Aorta (tissue), 5 donors: ENCODE measurements at regions of chr4 and their contacts with region 1.

Region 1: GRCh38 chr4:177250056-177250696 is 59.5 kb upstream of the NEIL3 start:
- DNase-seq: peak; percentile 69 to 88
- ATAC-seq: peak; percentile 87
- H3K4me3 ChIP-seq: no peak overlapping the region
- H3K27ac ChIP-seq: no peak overlapping the region
- H3K4me1 ChIP-seq: no peaks in the 10 kb centered on the region
- H3K27me3 ChIP-seq: no peaks in the 10 kb centered on the region

Region 2: GRCh38 chr4:177339477-177340374 is 89.5 kb after region 1 on chr4:
- intact Hi-C with region 1: loop called (anchors 1 to 2 kb)
- DNase-seq: no peak
- ATAC-seq: peak; percentile 79
- H3K4me3 ChIP-seq: no peak overlapping the region
- H3K27ac ChIP-seq: no peak overlapping the region
- H3K4me1 ChIP-seq: no peaks in the 10 kb centered on the region
- H3K27me3 ChIP-seq: no peaks in the 10 kb centered on the region